ENCODE measurements at regions of chr20 and their contacts with region 1.

Region 1: GRCh38 chr20:47379433-47380150 is 23.1 kb upstream of the ZMYND8 start:
- DNase-seq: peak; percentile 58
- H3K4me3 ChIP-seq: no peak overlapping the region
- CTCF ChIP-seq: no peak

Region 2: GRCh38 chr20:47220161-47220582 is 159.4 kb before region 1 on chr20:
- CTCF ChIA-PET with region 1: interaction called, 70 read pairs
- POLR2A ChIA-PET with region 1: no interaction called
- DNase-seq: no peak
- H3K4me3 ChIP-seq: no peak overlapping the region
- CTCF ChIP-seq: peak; percentile 57

Region 3: GRCh38 chr20:47258745-47259695 is 120.6 kb before region 1 on chr20:
- CTCF ChIA-PET with region 1: interaction called, 41 read pairs
- POLR2A ChIA-PET with region 1: no interaction called
- DNase-seq: no peak
- H3K4me3 ChIP-seq: no peak overlapping the region
- CTCF ChIP-seq: no peak

Region 4: GRCh38 chr20:47304287-47304686 is 75.3 kb before region 1 on chr20:
- CTCF ChIA-PET with region 1: interaction called, 14 read pairs
- POLR2A ChIA-PET with region 1: interaction called, 3 read pairs
- DNase-seq: no peak
- H3K4me3 ChIP-seq: no peak overlapping the region
- CTCF ChIP-seq: no peak

Region 5: DNA sequence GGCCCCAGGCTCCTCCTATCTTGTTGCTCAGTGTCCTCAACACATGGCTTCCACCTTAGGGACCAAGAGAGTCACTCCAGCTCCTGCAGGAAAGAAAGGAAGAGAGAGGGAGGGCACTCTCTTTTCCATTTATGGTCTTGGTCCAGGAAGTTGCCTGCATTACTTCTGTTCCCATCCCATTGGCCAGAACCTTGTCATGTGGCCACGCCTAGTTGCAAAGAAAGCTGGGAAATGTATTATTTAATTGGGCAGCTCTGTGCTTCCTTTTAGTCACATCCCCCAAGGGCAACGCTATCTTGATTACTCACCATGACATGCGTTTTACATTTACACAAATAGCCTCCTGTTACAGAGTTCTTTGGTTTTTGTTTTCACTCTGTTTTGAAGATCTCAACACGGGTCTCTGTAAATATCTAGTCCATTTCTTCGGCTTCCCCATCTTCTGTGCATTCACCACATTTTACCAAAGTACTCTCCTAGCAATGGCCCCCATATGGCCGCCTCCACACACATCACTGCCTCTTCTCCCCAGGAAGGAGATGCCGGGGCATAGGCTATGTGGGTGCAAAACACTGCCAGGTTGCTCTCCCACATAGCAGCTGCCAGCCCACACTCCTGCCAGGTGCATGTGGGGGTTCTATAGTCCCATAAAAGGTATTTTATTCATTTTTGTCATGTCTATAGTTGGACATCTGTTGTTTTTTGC is 12.6 kb after region 1 on chr20:
- CTCF ChIA-PET with region 1: interaction called, 19 read pairs
- POLR2A ChIA-PET with region 1: no interaction called
- DNase-seq: peak; percentile 71
- H3K4me3 ChIP-seq: no peak overlapping the region
- CTCF ChIP-seq: no peak

Region 6: DNA sequence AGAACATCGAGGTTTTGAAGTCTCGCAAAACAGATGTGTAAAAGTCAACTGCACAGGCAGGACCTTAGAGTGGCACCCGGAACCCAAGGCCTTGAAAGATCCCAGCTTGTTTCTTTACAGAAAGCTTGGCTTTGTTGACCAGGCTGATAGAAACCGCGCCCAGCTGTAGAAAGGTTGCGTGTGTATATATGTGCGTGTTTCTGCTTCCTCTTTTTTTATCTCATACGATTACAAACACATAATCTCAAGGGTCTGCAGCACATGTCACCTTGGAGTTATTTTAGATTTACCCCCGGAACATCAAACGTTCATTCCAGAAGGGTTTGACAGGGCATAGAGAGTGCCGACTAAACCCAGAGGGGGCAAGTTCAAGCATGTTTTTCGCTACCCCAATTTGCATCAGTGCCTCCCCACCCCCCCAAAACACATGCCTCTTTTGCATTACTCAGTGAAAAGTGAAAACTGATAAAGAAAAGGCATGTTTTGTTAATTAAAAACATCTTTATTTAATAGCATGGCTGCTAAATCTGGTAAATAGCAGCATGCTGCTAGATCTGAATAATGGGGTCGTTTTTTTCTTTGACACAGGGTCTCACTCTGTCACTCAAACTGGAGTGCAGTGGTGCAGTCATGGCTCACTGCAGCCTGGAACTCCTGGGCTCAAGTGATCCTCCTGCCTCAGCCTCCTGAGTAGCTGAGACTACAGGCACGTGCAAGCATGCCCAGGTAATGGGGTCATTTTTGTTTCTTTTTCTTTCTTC is 88.9 kb after region 1 on chr20:
- CTCF ChIA-PET with region 1: no interaction called
- POLR2A ChIA-PET with region 1: no interaction called
- DNase-seq: no peak
- H3K4me3 ChIP-seq: no peak overlapping the region
- CTCF ChIP-seq: no peak

Region 7: DNA sequence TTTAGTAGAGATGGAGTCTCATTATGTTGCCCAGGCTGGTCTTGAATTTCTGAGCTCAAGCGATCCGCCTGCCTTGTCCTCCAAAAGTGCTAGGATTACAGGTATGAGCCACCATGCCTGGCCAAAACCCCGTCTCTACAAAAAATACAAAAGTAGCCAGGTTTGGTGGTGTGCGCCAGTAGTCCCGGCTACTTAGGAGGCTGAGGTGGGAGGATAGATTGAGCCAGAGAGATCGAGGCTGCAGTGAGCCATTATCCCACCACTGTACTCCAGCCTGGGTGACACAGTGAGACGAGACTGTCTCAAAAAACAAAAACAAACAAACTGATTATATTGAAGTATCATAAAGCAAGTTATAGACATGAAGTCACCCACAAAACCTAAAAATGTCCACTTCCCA is 101.7 kb after region 1 on chr20:
- CTCF ChIA-PET with region 1: no interaction called
- POLR2A ChIA-PET with region 1: no interaction called
- DNase-seq: no peak
- H3K4me3 ChIP-seq: no peak overlapping the region
- CTCF ChIP-seq: no peak

Region 8: GRCh38 chr20:47620808-47621805 is 241.5 kb after region 1 on chr20:
- CTCF ChIA-PET with region 1: interaction called, 76 read pairs
- POLR2A ChIA-PET with region 1: no interaction called
- DNase-seq: no peak
- H3K4me3 ChIP-seq: no peak overlapping the region
- CTCF ChIP-seq: peak; percentile 46